Cardiac septum (tissue), 1 donor: ENCODE measurements at regions of chrX and their contacts with region 1.

Region 1: DNA sequence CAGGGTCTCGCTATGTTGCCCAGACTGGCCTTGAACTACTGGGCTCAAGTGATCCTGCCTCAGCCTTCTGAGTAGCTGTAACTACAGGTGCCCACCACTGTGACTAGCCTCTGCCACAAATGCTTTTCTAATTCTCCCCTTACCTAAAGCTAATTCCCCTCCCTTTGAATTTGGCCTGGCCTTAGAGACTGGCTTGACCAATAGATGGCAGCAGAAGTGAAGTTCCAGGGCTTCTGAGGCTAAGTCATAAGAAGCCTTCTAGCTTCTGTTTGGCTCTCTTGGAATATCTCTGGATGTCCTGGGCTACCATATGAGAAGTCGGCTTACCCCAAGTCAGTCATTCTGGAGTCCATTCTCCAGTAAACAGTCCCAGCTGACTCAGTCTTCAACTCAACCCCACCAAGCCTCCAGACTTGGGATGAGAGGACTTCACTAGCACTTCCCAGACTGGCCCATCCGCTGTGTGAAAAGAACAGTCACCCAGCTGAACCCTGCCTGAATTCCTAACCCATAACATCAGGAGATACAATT is 61.0 kb downstream of the HPRT1 start:
- DNase-seq: no peak

Region 2: DNA sequence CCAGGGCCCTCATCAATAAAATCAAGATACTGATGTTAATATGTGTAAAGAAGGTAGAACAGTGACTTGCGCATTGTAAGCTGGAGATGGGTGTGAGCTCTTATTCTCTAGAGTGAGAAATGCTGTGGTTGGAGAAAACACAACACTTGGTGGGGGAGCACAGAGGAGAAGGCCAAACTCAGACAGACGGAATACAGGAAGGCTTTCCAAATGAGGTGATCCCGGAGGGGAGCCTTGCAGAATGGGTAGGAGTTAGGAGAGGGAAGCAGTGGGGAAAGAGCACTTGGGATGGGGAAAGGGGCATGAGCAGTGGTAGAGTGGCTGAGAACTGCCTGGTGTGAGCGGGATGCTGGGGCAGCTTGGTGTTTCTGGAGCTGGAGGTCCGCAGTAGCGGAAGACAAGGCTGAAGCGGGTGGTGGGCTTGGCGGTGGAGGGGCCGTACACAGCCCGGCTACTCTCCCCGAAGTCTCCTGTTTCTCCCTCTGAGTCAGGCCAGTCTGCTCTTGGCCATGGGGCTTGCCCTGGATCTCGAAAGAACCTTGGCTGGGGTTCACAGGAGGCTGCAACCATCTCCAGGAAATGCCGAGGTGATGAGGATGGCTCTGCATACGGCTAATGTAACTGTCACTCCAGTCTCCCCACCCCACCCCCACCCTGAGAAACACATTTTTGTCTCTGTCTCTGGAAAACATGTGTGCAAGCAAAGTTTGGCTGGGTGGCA is 148.6 kb after region 1 on chrX:
- intact Hi-C with region 1: loop called (anchors 10 kb)
- DNase-seq: no peak

Region 3: DNA sequence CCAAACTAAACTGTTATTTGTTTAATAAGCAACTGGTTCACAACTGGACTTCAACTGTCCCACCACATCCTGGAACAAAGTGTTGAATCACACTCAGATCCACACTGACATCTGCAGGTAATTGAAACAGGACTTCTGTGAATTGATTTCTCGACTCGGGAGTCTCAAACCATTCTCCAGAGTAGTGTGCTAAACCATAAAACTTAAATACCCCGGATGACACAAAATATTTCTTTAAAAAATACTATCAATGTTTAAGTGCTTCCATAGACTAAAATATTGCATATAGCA is 232.7 kb after region 1 on chrX:
- intact Hi-C with region 1: loop called (anchors 2 kb)
- DNase-seq: no peak